AG04450 (cell line): ENCODE measurements at regions of chr11 and their contacts with region 1.

Region 1: DNA sequence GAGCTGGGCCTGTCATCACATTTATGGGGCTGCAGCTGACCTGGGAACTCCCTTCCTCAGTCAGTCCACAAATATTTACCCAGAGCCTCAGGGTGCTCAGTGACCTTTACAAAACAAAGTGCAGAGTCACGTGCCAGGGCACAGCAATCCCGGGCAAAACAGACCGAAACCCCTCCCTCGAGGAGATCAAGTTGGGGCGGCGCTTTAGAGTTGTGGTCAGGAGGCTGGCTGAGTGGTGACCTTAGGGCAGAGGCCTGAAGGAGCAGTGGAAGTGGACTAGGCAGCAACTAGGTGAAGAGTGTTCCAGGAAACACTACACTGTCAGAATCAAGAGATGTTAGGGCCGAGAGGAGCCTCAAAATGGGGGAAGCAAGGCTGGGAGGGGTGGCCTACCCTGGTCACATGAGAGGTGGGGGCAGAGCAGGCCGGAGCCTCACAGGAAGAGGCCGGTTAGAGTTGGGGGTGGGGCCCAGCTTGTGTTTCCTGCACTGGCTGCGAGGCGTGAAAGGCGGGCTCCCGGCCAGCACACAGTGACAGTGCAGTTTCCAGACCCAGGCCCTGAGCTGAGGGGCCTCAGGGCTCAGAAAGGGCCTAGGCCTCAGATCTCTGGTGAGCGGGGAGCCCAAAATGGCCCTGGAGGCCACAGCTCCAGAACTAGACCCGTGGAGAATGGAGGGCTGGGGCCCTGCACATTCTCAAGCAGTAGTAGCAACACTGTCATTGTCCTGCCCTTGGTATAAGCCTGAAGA is 3.7 kb upstream of the NEAT1 start:
- DNase-seq: no peak
- H3K4me3 ChIP-seq: peak overlapping the region; percentile 46
- H3K27ac ChIP-seq: peak overlapping the region; percentile 100
- H3K27me3 ChIP-seq: no peaks in the 10 kb centered on the region
- CTCF ChIP-seq: no peak

Region 2: DNA sequence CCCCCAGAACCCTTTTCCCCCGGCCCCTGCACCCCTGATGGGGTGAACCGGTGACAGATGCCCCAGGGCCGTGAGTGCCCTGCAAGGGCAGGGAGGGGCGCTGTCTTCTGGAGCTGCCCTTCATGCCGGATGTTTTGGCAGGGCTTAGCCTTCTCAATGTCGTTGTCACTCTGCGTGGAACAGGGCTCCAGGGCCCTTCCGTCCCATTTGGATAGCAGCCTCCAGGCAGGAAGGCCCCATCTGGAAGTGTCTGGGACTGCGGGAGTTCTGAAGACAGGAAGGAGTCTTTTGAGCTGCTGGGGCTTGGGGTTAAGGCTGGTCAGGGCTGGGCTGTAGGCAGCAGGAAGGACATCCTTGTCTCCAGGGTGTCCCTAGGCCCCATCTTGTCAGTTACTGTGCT is 27.9 kb before region 1 on chr11:
- CTCF ChIA-PET with region 1: interaction called, 18 read pairs
- POLR2A ChIA-PET with region 1: interaction called, 10 read pairs
- DNase-seq: no peak
- H3K4me3 ChIP-seq: peak overlapping the region; percentile 38
- H3K27ac ChIP-seq: peak overlapping the region; percentile 31
- H3K27me3 ChIP-seq: no peaks in the 10 kb centered on the region
- CTCF ChIP-seq: peak; percentile 4; the same call in 1 of the 2 replicates

Region 3: GRCh38 chr11:65432686-65433582 is 14.0 kb after region 1 on chr11:
- CTCF ChIA-PET with region 1: interaction called, 6 read pairs
- POLR2A ChIA-PET with region 1: interaction called, 46 read pairs
- DNase-seq: no peak
- H3K4me3 ChIP-seq: peak overlapping the region; percentile 14; the same call in 1 of the 2 replicates
- H3K27ac ChIP-seq: no peak overlapping the region
- H3K27me3 ChIP-seq: no peaks in the 10 kb centered on the region
- CTCF ChIP-seq: 0 out of 2 replicates have a peak, but pooled peaks have one; percentile 13

Region 4: GRCh38 chr11:65477149-65477965 is 58.5 kb after region 1 on chr11:
- CTCF ChIA-PET with region 1: interaction called, 11 read pairs
- POLR2A ChIA-PET with region 1: interaction called, 82 read pairs
- DNase-seq: no peak
- H3K4me3 ChIP-seq: peak overlapping the region; percentile 76
- H3K27ac ChIP-seq: peak overlapping the region; percentile 98
- H3K27me3 ChIP-seq: no peaks in the 10 kb centered on the region
- CTCF ChIP-seq: no peak

Region 5: GRCh38 chr11:65497141-65498041 is 78.5 kb after region 1 on chr11:
- CTCF ChIA-PET with region 1: interaction called, 18 read pairs
- POLR2A ChIA-PET with region 1: interaction called, 999 read pairs
- DNase-seq: peak; percentile 98
- H3K4me3 ChIP-seq: peak overlapping the region; percentile 97
- H3K27ac ChIP-seq: peak overlapping the region; percentile 98
- H3K27me3 ChIP-seq: no peaks in the 10 kb centered on the region
- CTCF ChIP-seq: no peak

Region 6: DNA sequence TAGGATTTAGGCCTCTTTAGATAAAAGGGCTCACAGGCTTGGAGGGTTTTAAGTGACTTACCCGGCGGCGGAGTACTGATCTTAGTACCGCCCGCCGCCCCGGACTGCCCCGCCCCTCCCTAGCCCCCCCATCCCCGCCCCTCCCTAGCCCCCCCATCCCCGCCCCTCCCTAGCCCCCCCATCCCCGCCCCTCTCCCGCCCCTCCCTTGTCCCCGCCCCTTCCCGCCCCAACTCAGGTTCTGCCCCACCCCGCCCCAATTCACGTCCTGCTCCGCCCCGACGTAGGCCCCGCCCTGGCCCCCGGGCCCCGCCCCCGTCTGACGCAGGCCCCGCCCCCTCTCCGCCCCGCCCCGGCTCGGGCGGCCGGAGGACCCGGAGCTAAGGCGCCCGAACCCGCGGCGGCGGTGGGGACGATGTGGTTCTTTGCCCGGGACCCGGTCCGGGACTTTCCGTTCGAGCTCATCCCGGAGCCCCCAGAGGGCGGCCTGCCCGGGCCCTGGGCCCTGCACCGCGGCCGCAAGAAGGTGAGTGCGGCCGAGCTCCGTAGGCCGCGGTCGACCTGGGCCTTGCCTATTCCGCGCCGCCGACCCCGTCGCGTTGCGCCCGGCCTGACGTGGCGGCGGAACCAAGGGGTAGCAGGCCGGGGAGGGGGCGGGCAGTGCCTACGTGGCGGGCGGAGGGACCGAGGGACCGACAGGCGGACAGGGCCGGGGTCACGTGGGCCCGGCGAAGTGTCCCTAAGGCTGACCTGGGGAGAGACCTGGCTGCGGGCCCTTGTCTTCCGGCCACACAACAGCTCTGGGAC is 106.1 kb after region 1 on chr11 and contains the start of gene SCYL1:
- CTCF ChIA-PET with region 1: interaction called, 8 read pairs
- POLR2A ChIA-PET with region 1: interaction called, 10 read pairs
- DNase-seq: no peak
- H3K4me3 ChIP-seq: peak within 1 kb of the TSS; percentile 92
- H3K27ac ChIP-seq: peak within 1 kb of the TSS; percentile 61
- H3K27me3 ChIP-seq: no peaks in the 10 kb centered on the region
- CTCF ChIP-seq: no peak
- polyA plus RNA-seq, gene SCYL1: 60.9 and 90.0 TPM in 2 replicates